CD14-positive monocyte (primary cell): ENCODE measurements at regions of chr2 and their contacts with region 1.

Region 1: GRCh38 chr2:232438951-232439757 is 16.8 kb upstream of the ALPI start:
- DNase-seq: peak in 1 of 3 donors; percentile 13
- H3K4me3 ChIP-seq: no peak overlapping the region
- H3K4me3 Mint-ChIP-seq: no peak overlapping the region
- H3K27ac ChIP-seq: no peak overlapping the region
- H3K27ac Mint-ChIP-seq: no peak overlapping the region
- H3K4me1 ChIP-seq: no peaks in the 10 kb centered on the region
- H3K4me1 Mint-ChIP-seq: peaks cover 3% of the 10 kb centered on the region
- H3K27me3 ChIP-seq: no peaks in the 10 kb centered on the region
- H3K27me3 Mint-ChIP-seq: peaks cover 0 to 14% (median 13%) of the 10 kb centered on the region in 3 donors
- CTCF ChIP-seq: peak; percentile 80

Region 2: DNA sequence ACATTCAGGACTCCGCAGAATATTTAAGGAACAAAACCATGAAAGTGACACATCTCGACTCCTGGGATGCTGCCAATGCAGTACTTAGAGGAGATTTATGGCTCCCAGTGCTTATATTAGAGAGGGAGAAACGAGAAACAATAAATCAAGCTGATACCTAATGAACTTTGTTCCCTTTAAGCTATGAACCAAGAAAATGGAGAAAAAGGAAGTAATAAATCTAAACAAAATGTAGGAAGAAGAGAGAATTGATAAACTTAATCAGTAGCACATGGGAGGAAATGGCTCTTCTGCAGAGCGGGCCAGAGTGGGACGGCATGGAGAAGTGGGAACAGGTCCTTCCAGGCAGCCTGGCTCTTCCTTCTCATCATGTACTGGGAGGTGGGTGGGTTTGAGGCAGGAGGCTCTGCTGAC is 555.7 kb before region 1 on chr2:
- intact Hi-C with region 1: no loop called
- DNase-seq: no peak
- H3K4me3 ChIP-seq: no peak overlapping the region
- H3K4me3 Mint-ChIP-seq: no peak overlapping the region
- H3K27ac ChIP-seq: no peak overlapping the region
- H3K27ac Mint-ChIP-seq: no peak overlapping the region
- H3K4me1 ChIP-seq: no peaks in the 10 kb centered on the region
- H3K4me1 Mint-ChIP-seq: peaks cover 4% of the 10 kb centered on the region
- H3K27me3 ChIP-seq: no peaks in the 10 kb centered on the region
- H3K27me3 Mint-ChIP-seq: peaks cover 6 to 12% (median 12%) of the 10 kb centered on the region in 3 donors
- CTCF ChIP-seq: no peak

Region 3: GRCh38 chr2:231905026-231905425 is 534.1 kb before region 1 on chr2:
- intact Hi-C with region 1: loop called (anchors 2 to 5 kb)
- DNase-seq: no peak
- H3K4me3 ChIP-seq: no peak overlapping the region
- H3K4me3 Mint-ChIP-seq: no peak overlapping the region
- H3K27ac ChIP-seq: no peak overlapping the region
- H3K27ac Mint-ChIP-seq: no peak overlapping the region
- H3K4me1 ChIP-seq: no peaks in the 10 kb centered on the region
- H3K4me1 Mint-ChIP-seq: peaks cover 3% of the 10 kb centered on the region
- H3K27me3 ChIP-seq: no peaks in the 10 kb centered on the region
- H3K27me3 Mint-ChIP-seq: peaks cover 2 to 19% (median 8%) of the 10 kb centered on the region in 3 donors
- CTCF ChIP-seq: no peak

Region 4: DNA sequence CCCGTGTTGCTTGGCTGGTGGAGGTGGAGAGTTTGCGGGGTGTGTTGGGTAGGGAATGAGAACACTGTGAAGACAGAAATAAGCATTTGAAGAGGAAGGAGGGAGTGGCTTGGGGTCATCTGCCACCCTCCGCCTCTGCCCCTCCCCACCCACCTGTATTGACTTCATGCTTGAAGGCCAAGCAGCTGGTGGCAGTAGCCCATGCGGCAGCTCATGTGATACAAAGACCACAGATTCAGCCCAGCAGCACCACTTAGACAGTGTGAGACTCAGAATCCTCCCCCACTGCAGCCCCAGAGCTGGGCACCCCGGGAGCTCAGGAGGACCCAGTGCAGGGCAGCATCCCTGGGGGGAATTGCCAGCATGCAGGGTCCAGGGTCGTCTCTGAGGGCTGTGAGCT is 528.4 kb before region 1 on chr2:
- intact Hi-C with region 1: loop called (anchors 2 to 5 kb)
- DNase-seq: no peak
- H3K4me3 ChIP-seq: no peak overlapping the region
- H3K4me3 Mint-ChIP-seq: no peak overlapping the region
- H3K27ac ChIP-seq: no peak overlapping the region
- H3K27ac Mint-ChIP-seq: no peak overlapping the region
- H3K4me1 ChIP-seq: no peaks in the 10 kb centered on the region
- H3K4me1 Mint-ChIP-seq: peaks cover 5% of the 10 kb centered on the region
- H3K27me3 ChIP-seq: no peaks in the 10 kb centered on the region
- H3K27me3 Mint-ChIP-seq: peaks cover 5 to 15% (median 11%) of the 10 kb centered on the region in 3 donors
- CTCF ChIP-seq: no peak

Region 5: GRCh38 chr2:232581725-232582124 is 142.6 kb after region 1 on chr2:
- intact Hi-C with region 1: no loop called
- DNase-seq: no peak
- H3K4me3 ChIP-seq: no peak overlapping the region
- H3K4me3 Mint-ChIP-seq: no peak overlapping the region
- H3K27ac ChIP-seq: no peak overlapping the region
- H3K27ac Mint-ChIP-seq: peak overlapping the region in 1 of 7 donors; percentile 25
- H3K4me1 ChIP-seq: peaks cover under 1% of the 10 kb centered on the region in 2 donors
- H3K4me1 Mint-ChIP-seq: peaks cover 5% of the 10 kb centered on the region
- H3K27me3 ChIP-seq: no peaks in the 10 kb centered on the region
- H3K27me3 Mint-ChIP-seq: no peaks in the 10 kb centered on the region
- CTCF ChIP-seq: no peak